Transverse colon (tissue), 4 donors: ENCODE measurements at regions of chr2 and their contacts with region 1.

Region 1: DNA sequence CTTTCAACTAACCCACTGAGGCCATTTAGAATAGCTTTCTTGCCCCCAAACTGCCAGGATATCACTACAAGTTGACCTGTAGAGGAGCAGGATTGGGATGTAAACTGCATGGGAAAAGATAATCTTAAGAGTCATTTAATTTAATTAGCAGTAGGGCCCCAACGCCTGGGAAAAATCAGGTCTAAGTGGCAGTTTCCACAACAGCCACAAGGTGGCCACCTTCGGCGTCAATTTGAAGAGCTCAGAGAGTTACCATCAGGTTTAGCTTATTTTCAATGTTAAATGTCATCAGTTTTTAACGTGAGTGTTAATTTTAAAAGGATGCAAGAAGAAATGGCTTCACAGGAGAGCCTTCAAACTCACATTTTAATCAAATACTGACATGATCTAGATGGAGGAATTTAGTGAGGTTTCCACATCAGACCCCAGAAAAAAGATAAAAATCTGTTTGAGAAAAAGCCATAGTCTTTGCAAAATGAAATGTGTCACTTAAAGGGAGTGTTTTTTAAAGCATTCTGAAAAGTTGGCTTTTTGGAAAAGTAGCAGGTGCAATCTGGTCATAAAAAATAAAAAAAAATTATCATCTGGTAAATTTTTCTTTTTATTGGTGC is 77.3 kb upstream of the UPP2 start:
- DNase-seq: peak; percentile 48
- H3K4me3 ChIP-seq: no peak overlapping the region
- H3K27ac ChIP-seq: no peak overlapping the region
- H3K4me1 ChIP-seq: no peaks in the 10 kb centered on the region
- H3K27me3 ChIP-seq: no peaks in the 10 kb centered on the region
- CTCF ChIP-seq: peak; percentile 80 to 89 (median 82)
- EP300 ChIP-seq: no peak
- POLR2A ChIP-seq: no peak

Region 2: DNA sequence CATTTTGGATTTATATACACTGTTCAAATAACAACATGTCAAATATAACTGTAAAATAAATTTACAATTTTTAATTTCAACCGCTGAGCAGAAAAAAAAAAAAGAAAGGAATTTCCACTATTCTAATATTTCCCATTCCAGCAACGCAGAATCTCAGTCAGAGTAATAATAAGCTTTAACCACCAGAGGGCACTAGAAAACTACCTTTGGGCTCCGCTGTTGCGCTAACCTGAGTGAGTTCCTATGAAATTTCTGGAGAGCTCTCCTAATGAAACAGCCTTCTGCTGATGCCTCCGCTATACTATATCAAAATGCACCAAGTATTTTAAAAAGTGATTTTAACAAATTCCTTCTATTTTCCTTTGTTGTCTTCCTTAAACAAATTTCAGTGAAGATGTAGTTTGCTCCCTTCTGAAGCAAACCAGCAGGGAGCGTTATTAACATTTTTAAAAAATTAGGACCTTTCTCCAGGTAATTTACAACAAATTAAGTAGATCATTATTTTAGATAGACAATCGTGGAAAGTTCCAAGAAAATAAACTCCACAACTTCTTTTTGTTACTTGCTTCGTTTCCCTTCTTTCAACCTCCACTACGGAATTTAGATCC is 721.8 kb before region 1 on chr2:
- in situ Hi-C with region 1: loop called in 1 of 4 experiments (anchors 25 kb)
- intact Hi-C with region 1: no loop called
- DNase-seq: no peak
- H3K4me3 ChIP-seq: no peak overlapping the region
- H3K27ac ChIP-seq: no peak overlapping the region
- H3K4me1 ChIP-seq: peaks cover 0 to 5% (median 0%) of the 10 kb centered on the region in 4 donors
- H3K27me3 ChIP-seq: peaks cover 16% of the 10 kb centered on the region
- CTCF ChIP-seq: peak; percentile 67 to 79 (median 74)
- EP300 ChIP-seq: no peak
- POLR2A ChIP-seq: no peak

Region 3: DNA sequence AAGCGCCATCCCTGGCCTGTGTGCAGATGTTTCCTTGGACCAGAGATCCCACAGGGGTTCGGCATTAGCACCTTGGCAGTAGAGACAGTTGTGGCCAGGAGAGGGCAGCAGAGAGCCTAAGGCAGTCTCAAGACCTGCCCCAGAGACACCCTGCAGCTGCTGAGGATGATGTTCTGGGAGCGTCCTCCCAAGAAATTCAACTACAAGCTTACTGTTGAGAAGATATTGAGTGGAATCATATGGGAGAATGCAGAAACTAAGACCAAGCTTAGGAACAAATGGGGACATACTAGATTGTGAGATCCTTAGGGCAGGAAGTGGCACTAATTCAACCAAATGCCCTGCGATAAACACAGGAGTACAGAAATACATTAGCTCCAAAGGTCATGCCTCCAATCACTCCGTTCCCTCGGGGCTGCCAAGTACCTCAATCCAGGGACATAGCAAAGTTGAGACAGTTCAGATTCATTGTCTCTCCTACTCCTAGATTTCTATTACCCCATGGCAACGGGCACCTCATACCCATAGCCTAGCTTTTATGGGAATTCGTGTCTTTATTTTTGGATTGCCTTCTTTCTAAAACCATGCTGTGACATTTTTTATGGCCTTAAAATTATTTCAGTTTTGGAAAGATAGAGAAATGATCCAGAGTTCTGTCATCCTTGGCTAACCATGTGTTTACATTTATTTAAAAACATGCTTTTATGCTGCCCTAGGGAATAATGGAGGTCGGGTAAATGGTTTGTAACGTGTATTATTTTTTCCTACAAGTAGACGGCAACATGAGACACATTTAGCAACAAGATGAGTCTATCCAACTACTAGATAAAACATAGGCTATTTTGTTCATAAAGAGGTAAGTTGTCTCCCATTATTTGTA is 696.5 kb before region 1 on chr2:
- in situ Hi-C with region 1: loop called in 2 of 4 experiments (anchors 25 kb)
- intact Hi-C with region 1: no loop called
- DNase-seq: peak; percentile 91
- H3K4me3 ChIP-seq: no peak overlapping the region
- H3K27ac ChIP-seq: peak overlapping the region in 2 of 4 donors; percentile 5 to 23
- H3K4me1 ChIP-seq: peaks cover 0 to 35% (median 17%) of the 10 kb centered on the region in 4 donors
- H3K27me3 ChIP-seq: no peaks in the 10 kb centered on the region
- CTCF ChIP-seq: peak; percentile 83 to 94 (median 92)
- EP300 ChIP-seq: no peak
- POLR2A ChIP-seq: no peak

Region 4: DNA sequence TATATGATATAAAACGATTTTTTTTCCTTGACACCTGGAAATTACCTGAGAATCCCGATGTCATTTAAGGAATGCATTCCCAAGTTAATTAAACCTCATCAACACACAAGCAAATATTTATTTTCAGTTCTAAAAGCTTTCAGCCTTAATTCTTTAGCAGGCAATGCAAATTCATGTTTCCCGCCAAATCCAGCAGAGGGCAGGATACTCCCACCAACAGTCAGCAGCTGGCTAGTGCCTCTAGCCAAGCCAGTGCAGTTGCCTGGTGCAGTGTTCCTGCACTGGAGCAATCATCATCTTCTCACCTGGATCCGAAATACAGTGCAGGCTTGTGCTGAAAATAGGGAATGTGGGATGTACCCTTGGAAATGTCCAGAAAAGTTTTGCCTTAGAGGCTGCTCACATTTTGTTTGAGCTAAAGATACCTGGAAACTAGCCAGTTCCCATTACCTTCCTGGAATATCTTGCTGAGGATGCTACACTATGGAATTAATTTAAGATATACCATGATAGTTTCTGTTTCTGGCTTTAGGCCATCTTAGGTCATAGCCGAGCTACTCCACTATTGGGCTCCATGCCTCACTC is 532.1 kb before region 1 on chr2:
- in situ Hi-C with region 1: loop called in 3 of 4 experiments (anchors 10 to 25 kb)
- intact Hi-C with region 1: loop called (anchors 10 kb)
- DNase-seq: peak; percentile 77
- H3K4me3 ChIP-seq: no peak overlapping the region
- H3K27ac ChIP-seq: no peak overlapping the region
- H3K4me1 ChIP-seq: peaks cover 0 to 5% (median 3%) of the 10 kb centered on the region in 4 donors
- H3K27me3 ChIP-seq: no peaks in the 10 kb centered on the region
- CTCF ChIP-seq: peak; percentile 52 to 76 (median 67)
- EP300 ChIP-seq: no peak
- POLR2A ChIP-seq: no peak

Region 5: GRCh38 chr2:157751462-157752058 is 272.8 kb before region 1 on chr2:
- in situ Hi-C with region 1: loop called in 1 of 4 experiments (anchors 25 kb)
- intact Hi-C with region 1: no loop called
- DNase-seq: no peak
- H3K4me3 ChIP-seq: no peak overlapping the region
- H3K27ac ChIP-seq: no peak overlapping the region
- H3K4me1 ChIP-seq: no peaks in the 10 kb centered on the region
- H3K27me3 ChIP-seq: no peaks in the 10 kb centered on the region
- CTCF ChIP-seq: no peak
- EP300 ChIP-seq: no peak
- POLR2A ChIP-seq: no peak

Region 6: GRCh38 chr2:158745044-158745865 is 720.9 kb after region 1 on chr2:
- in situ Hi-C with region 1: loop called in 3 of 4 experiments (anchors 5 to 10 kb)
- intact Hi-C with region 1: loop called (anchors 5 kb)
- DNase-seq: peak; percentile 37
- H3K4me3 ChIP-seq: no peak overlapping the region
- H3K27ac ChIP-seq: no peak overlapping the region
- H3K4me1 ChIP-seq: no peaks in the 10 kb centered on the region
- H3K27me3 ChIP-seq: peaks cover 24% of the 10 kb centered on the region
- CTCF ChIP-seq: peak in 4 of 5 experiments; percentile 27 to 44 (median 39)
- EP300 ChIP-seq: no peak
- POLR2A ChIP-seq: no peak